ENCODE measurements at regions of chr20 and their contacts with region 1.

Region 1: GRCh38 chr20:10427060-10427692 is 6.8 kb downstream of the MKKS start:
- DNase-seq: peak; percentile 55 to 84
- ATAC-seq: peak in 1 of 2 experiments; percentile 64; a peak in 3 of 6 replicates
- H3K4me3 ChIP-seq: no peak overlapping the region
- H3K27ac ChIP-seq: peak overlapping the region; percentile 90 to 96
- H3K4me1 ChIP-seq: peaks cover 80% of the 10 kb centered on the region
- CTCF ChIP-seq: peak; percentile 98
- EP300 ChIP-seq: no peak
- POLR2A ChIP-seq: no peak
- RAD21 ChIP-seq: peak; percentile 87 to 90

Region 2: DNA sequence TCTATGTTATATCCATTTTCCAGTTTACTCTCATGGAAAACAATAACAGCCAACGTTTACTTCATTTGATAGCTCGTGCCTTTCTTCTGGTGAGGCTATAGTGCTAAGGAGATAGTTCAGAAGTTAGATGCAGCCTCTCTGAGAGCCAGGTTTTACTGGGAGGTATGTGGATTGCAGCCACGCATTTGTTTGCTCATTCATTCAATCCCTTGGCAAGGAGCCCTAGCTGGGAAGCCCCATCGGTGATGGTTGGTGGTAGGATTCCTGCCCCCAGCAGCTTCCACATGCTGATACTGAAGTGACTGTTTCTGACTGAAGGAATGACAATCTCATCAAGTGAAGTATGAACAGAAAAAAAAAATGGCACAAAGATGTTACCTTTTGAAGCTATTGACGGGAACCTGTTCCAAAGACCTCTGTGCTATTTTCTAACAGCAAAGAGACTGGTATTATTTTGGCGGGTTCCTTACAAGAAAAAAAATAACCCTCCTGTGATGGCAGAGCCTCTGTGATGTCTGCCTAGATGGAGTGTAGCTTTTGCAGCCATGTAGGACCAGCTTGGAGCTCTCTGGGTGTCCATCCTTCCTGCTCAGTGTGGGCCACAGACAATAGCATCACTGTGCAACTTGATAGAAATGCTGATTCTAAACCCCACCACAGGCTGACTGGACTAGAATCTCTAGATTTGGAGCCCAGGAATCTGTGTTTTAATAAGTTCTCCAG is 178.0 kb before region 1 on chr20:
- CTCF ChIA-PET with region 1: interaction called, 10 read pairs
- POLR2A ChIA-PET with region 1: no interaction called
- DNase-seq: peak; percentile 51 to 94
- ATAC-seq: peak; percentile 35 to 58; a peak in 4 of 6 replicates
- H3K4me3 ChIP-seq: no peak overlapping the region
- H3K27ac ChIP-seq: peak overlapping the region; percentile 89 to 91
- H3K4me1 ChIP-seq: peaks cover 78% of the 10 kb centered on the region
- CTCF ChIP-seq: no peak
- EP300 ChIP-seq: peak; percentile 85 to 92; a peak in 3 of 5 replicates
- POLR2A ChIP-seq: no peak
- RAD21 ChIP-seq: peak; percentile 37 to 59

Region 3: GRCh38 chr20:10306440-10307358 is 120.5 kb before region 1 on chr20:
- CTCF ChIA-PET with region 1: interaction called, 11 read pairs
- POLR2A ChIA-PET with region 1: no interaction called
- DNase-seq: no peak
- ATAC-seq: peak in 1 of 2 experiments; percentile 56; a peak in 3 of 6 replicates
- H3K4me3 ChIP-seq: no peak overlapping the region
- H3K27ac ChIP-seq: peak overlapping the region; percentile 76 to 83
- H3K4me1 ChIP-seq: peaks cover 81% of the 10 kb centered on the region
- CTCF ChIP-seq: no peak
- EP300 ChIP-seq: peak; percentile 50 to 64; a peak in 2 of 5 replicates
- POLR2A ChIP-seq: no peak
- RAD21 ChIP-seq: 0 out of 5 replicates have a peak, but pooled peaks of 1 of the 2 experiments have one; percentile 18

Region 4: DNA sequence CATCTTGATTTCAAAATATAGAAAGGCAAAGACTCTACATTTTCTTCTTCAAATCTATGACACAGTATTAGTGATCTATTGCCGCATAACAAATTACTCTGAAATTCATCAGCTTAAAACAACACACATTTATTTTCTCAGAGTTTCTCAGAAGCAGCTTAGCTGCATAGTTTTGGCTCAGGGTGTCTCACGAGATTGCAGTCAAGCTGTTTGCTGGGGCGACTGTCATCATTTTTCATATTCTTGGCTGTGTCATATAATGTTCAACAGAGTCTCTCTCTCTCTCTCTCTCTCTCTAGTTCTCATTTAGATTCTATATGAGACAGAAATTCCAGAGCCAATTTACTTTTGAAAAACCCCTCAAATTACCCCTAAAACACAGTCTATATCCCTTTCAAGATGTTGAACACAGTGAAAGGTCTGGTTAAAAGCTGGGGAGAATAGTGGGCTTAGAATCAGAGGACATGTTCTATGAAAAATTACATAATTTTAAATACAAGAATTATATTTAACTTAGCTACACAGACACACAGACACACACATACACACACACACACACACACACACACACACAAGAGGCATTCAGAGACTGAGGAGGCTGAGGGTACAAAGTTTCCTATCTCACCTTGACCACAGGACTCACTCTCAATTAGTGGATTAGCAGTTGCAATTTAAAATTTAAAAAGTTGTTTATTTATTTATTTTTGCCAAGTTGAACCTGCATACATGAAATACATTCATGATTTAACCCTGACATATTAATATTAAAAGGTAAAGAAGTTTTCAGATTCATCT is 79.9 kb before region 1 on chr20:
- CTCF ChIA-PET with region 1: interaction called, 42 read pairs
- POLR2A ChIA-PET with region 1: interaction called, 10 read pairs
- DNase-seq: no peak
- ATAC-seq: no peak
- H3K4me3 ChIP-seq: no peak overlapping the region
- H3K27ac ChIP-seq: peak overlapping the region; percentile 92 to 93
- H3K4me1 ChIP-seq: peaks cover 59% of the 10 kb centered on the region
- CTCF ChIP-seq: no peak
- EP300 ChIP-seq: no peak
- POLR2A ChIP-seq: no peak
- RAD21 ChIP-seq: no peak

Region 5: GRCh38 chr20:10369723-10370090 is 57.5 kb before region 1 on chr20:
- CTCF ChIA-PET with region 1: interaction called, 11 read pairs
- POLR2A ChIA-PET with region 1: interaction called, 5 read pairs
- DNase-seq: peak; percentile 82 to 95
- ATAC-seq: peak; percentile 90 to 95
- H3K4me3 ChIP-seq: no peak overlapping the region
- H3K27ac ChIP-seq: peak overlapping the region; percentile 90 to 93
- H3K4me1 ChIP-seq: peaks cover 55% of the 10 kb centered on the region
- CTCF ChIP-seq: no peak
- EP300 ChIP-seq: peak; percentile 83 to 90; a peak in 4 of 5 replicates
- POLR2A ChIP-seq: no peak
- RAD21 ChIP-seq: peak; percentile 6 to 52; a peak in 2 of 5 replicates

Region 6: DNA sequence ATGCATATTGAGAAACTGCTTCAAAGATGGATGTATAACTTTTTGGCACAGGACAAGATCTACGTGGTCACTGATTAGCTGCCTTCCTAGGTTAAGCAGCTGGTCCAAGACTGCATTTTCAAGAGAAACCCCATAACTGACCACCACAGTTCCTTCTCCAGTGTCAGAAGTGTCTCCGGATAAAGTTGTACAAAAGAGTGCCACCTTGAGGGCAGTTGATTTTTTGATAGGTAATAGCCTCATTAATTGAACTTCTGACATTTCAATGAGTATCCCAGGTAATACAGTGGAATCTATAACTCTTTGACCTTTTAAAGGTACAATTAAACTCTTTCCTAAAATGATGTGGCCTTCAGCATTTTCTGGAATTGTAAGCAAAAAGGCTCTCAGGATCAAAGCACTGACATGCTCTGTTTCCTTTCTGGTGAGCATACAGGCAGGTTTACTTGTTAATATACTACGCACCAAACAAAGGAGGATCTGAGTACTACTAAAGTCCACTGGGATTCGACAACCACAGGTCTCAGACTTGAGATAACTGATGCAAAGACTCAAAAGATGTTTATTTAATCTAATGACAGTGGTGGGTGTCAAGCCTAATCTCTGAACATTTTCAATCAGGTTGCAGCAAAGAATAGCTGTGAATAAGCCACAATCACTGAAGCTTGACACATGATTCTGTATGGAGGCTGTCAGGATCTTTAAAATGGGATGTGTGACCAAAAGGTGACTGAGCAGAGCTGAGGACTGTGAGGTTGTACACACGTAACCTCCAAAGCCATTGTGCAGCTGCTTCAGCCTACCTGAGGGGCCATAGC is 14.4 kb before region 1 on chr20:
- CTCF ChIA-PET with region 1: interaction called, 66 read pairs
- POLR2A ChIA-PET with region 1: no interaction called
- DNase-seq: peak; percentile 43 to 55
- ATAC-seq: peak; percentile 69 to 82; a peak in 5 of 6 replicates
- H3K4me3 ChIP-seq: no peak overlapping the region
- H3K27ac ChIP-seq: peak overlapping the region; percentile 63 to 82
- H3K4me1 ChIP-seq: peaks cover 83% of the 10 kb centered on the region
- CTCF ChIP-seq: peak; percentile 78
- EP300 ChIP-seq: no peak
- POLR2A ChIP-seq: no peak
- RAD21 ChIP-seq: peak; percentile 69 to 76

Region 7: GRCh38 chr20:10511509-10512251 is 84.5 kb after region 1 on chr20:
- CTCF ChIA-PET with region 1: no interaction called
- POLR2A ChIA-PET with region 1: no interaction called
- DNase-seq: peak; percentile 94 to 95
- ATAC-seq: peak; percentile 95 to 97
- H3K4me3 ChIP-seq: no peak overlapping the region
- H3K27ac ChIP-seq: peak overlapping the region; percentile 88 to 89
- H3K4me1 ChIP-seq: peaks cover 66% of the 10 kb centered on the region
- CTCF ChIP-seq: no peak
- EP300 ChIP-seq: peak; percentile 33 to 54; a peak in 2 of 5 replicates
- POLR2A ChIP-seq: no peak
- RAD21 ChIP-seq: 0 out of 5 replicates have a peak, but pooled peaks of 1 of the 2 experiments have one; percentile 32

Measured in A549 (cell line).